ENCODE measurements at regions of chr14 and their contacts with region 1.

Region 1: GRCh38 chr14:71625891-71626701 is 306.1 kb upstream of the RGS6 start:
- DNase-seq: no peak
- H3K4me3 ChIP-seq: no peak overlapping the region
- H3K27ac ChIP-seq: no peak overlapping the region
- H3K4me1 ChIP-seq: peaks cover 8% of the 10 kb centered on the region
- H3K27me3 ChIP-seq: no peaks in the 10 kb centered on the region
- CTCF ChIP-seq: no peak

Region 2: DNA sequence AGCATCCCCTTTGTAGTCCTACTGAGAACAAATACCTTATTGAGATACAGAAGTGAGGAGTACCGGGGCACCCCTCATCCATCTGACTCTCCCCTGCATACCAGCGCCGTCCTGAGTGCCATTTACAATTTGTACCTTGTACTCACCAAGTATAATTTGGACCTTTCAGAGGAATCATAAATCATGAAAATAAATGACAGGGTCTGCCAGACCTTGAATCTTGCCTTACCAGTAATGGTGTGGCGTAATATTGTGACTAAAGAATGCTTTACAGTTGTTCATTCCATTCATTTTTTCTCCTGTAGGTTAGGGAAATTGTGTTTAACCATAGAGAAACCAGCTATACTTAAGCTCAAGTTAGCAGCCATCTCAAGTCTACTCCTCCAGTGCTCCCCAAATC is 62.5 kb after region 1 on chr14:
- CTCF ChIA-PET with region 1: no interaction called
- dilution Hi-C with region 1: no loop called
- in situ Hi-C with region 1: no loop called
- intact Hi-C with region 1: loop called (anchors 2 kb)
- DNase-seq: no peak
- H3K4me3 ChIP-seq: no peak overlapping the region
- H3K27ac ChIP-seq: no peak overlapping the region
- H3K4me1 ChIP-seq: no peaks in the 10 kb centered on the region
- H3K27me3 ChIP-seq: no peaks in the 10 kb centered on the region
- CTCF ChIP-seq: no peak

Measured in mammary epithelial cell (primary cell).